Gastrocnemius medialis (tissue), 4 donors: ENCODE measurements at regions of chr4 and their contacts with region 1.

Region 1: DNA sequence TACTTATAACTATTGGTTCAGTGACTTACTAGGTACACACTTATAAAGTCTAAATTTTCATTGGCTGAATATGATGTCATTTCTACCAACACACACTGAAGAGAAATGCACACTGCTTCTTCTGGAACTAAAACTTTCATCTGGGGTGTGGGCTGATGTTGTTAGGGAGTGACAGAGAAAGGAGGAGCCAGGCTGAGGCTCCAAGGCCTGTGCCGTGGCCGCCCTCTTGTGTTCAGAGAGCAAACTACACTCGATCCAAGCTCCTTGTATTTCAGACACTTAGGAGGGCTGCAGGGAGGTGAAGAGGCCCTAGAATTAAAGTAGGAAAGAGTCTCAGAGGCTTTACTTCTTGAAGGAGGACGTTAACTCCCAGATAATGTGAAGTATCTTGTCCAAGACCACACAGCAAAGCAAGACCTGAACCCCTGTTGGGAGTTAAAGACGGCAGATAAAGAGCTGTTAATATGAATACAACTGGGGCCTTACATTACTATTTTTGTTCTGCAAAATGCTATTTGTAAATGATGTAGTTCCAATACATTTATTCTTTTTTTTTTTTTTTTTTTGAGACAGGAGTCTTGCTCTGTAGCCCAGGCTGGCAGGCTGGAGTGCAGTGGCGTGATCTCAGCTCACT is 137.5 kb downstream of the AFAP1 start:
- DNase-seq: peak; percentile 46 to 70
- ATAC-seq: peak; percentile 60 to 68
- H3K4me3 ChIP-seq: no peak overlapping the region
- H3K27ac ChIP-seq: peak overlapping the region in 1 of 4 donors; percentile 33
- H3K4me1 ChIP-seq: peaks cover 26 to 28% of the 10 kb centered on the region in 2 donors
- H3K27me3 ChIP-seq: no peaks in the 10 kb centered on the region
- CTCF ChIP-seq: peak; percentile 80 to 96 (median 84)
- POLR2A ChIP-seq: no peak

Region 2: GRCh38 chr4:7761720-7762119 is 40.5 kb before region 1 on chr4:
- in situ Hi-C with region 1: no loop called
- intact Hi-C with region 1: loop called (anchors 1 kb)
- DNase-seq: peak; percentile 52 to 70
- ATAC-seq: peak; percentile 48 to 68
- H3K4me3 ChIP-seq: no peak overlapping the region
- H3K27ac ChIP-seq: no peak overlapping the region
- H3K4me1 ChIP-seq: peaks cover 18% of the 10 kb centered on the region in 2 donors
- H3K27me3 ChIP-seq: no peaks in the 10 kb centered on the region
- CTCF ChIP-seq: peak; percentile 67 to 79 (median 78)
- POLR2A ChIP-seq: no peak

Region 3: DNA sequence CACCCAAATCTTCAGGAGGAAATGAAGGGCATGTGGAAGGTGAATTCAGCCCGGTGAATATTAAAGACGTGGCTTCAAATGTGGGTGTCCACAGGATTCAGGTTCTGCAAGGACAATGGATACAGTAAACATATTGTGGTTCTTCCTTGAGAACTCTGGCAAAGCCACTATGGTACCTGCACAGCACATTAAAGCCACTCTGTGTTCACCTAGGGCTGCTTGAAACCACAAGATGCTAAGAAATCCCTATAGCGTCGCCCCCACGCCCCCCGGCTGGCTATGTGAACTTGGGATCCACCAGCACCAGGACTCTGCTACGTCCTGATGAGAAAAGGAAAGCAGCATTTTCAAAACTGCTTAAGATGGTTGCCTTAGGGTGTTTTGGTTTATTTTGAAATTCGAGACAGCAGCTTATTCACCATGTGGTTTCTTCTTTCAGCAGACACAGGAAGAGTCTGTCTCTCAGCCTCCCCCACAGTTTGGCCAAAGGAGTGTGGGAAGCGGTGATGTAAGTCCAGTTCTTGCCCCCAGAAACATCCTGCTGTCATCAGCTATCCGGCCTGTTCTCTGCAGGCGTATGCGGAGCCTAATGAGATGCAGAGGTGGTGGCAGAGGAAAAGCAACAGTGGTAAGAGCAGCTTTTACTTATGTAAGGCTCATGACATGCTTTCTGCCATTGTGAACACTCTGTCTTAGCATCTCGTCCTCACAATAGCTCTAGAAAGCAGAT is 25.9 kb after region 1 on chr4:
- in situ Hi-C with region 1: no loop called
- intact Hi-C with region 1: loop called (anchors 2 kb)
- DNase-seq: peak; percentile 67 to 71
- ATAC-seq: peak; percentile 47 to 76
- H3K4me3 ChIP-seq: peak overlapping the region in 2 of 4 donors; percentile 6 to 19
- H3K27ac ChIP-seq: peak overlapping the region; percentile 82 to 92 (median 85)
- H3K4me1 ChIP-seq: peaks cover 42 to 58% of the 10 kb centered on the region in 2 donors
- H3K27me3 ChIP-seq: no peaks in the 10 kb centered on the region
- CTCF ChIP-seq: no peak
- POLR2A ChIP-seq: no peak

Region 4: GRCh38 chr4:7872264-7872771 is 70.1 kb after region 1 on chr4:
- in situ Hi-C with region 1: no loop called
- intact Hi-C with region 1: loop called (anchors 1 kb)
- DNase-seq: peak; percentile 85 to 91
- ATAC-seq: peak; percentile 89
- H3K4me3 ChIP-seq: peak overlapping the region in 3 of 4 donors; percentile 8 to 35 (median 34)
- H3K27ac ChIP-seq: peak overlapping the region; percentile 78 to 83 (median 82)
- H3K4me1 ChIP-seq: peaks cover 24 to 25% of the 10 kb centered on the region in 2 donors
- H3K27me3 ChIP-seq: no peaks in the 10 kb centered on the region
- CTCF ChIP-seq: no peak
- POLR2A ChIP-seq: no peak

Region 5: GRCh38 chr4:7929118-7929951 is 127.1 kb after region 1 on chr4:
- in situ Hi-C with region 1: loop called in 3 of 4 experiments (anchors 5 to 10 kb)
- intact Hi-C with region 1: loop called (anchors 1 kb)
- DNase-seq: peak; percentile 38 to 49
- ATAC-seq: peak; percentile 71 to 92
- H3K4me3 ChIP-seq: no peak overlapping the region
- H3K27ac ChIP-seq: no peak overlapping the region
- H3K4me1 ChIP-seq: peaks cover 0 to 3% of the 10 kb centered on the region in 2 donors
- H3K27me3 ChIP-seq: no peaks in the 10 kb centered on the region
- CTCF ChIP-seq: peak; percentile 28 to 41 (median 33)
- POLR2A ChIP-seq: no peak

Region 6: DNA sequence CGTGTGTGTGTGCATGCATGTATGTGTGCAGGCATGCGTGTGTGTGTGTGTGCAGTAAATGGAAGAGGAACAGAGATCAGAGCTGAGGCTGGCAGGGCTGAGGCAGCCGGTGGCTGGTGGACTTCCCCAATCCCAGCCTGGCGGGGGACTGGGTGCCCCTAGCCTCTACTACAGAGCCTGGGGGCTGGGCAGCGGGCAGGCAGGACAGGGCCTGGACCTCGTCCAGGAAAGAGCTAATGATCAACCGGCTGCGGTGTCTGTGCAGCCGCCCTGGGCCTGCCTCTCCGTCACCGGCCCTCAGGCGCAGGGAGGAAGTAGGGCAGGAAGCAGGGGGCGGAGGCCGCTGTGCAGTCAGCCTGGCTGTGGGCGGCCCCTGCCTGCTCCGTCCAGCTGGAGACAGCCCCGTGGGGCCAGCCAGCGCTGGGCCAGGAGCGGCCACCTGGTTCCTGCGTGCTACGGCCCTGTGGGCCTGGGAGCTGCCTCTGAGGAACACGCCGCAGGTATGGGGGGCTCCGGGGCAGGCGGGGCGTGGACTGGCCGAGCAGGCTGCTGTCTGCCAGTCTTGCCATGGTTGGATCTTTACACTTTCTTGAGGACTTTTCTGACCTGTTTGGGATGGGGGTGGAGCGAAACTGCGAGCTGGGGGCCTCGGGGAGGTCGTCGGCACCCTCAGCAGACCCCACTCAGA is 396.8 kb after region 1 on chr4 and contains the start of gene SH3TC1:
- in situ Hi-C with region 1: loop called in 1 of 4 experiments (anchors 25 kb)
- intact Hi-C with region 1: no loop called
- DNase-seq: peak; percentile 63 to 69
- ATAC-seq: peak; percentile 32 to 38
- H3K4me3 ChIP-seq: peak within 1 kb of the TSS; percentile 32 to 50 (median 46)
- H3K27ac ChIP-seq: peak within 1 kb of the TSS; percentile 37 to 73 (median 63)
- H3K4me1 ChIP-seq: peaks cover 18 to 33% of the 10 kb centered on the region in 2 donors
- H3K27me3 ChIP-seq: no peaks in the 10 kb centered on the region
- CTCF ChIP-seq: no peak
- POLR2A ChIP-seq: peak; percentile 40 to 49
- total RNA-seq, gene SH3TC1: 2.9 to 8.5 (median 5.8) TPM